MCF 10A (cell line): ENCODE measurements at regions of chr2 and their contacts with region 1.

Region 1: GRCh38 chr2:223993621-223994232 is 36.5 kb downstream of the MRPL44 start:
- DNase-seq: peak; percentile 81
- H3K4me3 Mint-ChIP-seq: no peak overlapping the region
- H3K27ac Mint-ChIP-seq: peak overlapping the region; percentile 9
- H3K4me1 Mint-ChIP-seq: peaks cover 11% of the 10 kb centered on the region
- H3K27me3 Mint-ChIP-seq: no peaks in the 10 kb centered on the region
- CTCF ChIP-seq: peak; percentile 73

Region 2: DNA sequence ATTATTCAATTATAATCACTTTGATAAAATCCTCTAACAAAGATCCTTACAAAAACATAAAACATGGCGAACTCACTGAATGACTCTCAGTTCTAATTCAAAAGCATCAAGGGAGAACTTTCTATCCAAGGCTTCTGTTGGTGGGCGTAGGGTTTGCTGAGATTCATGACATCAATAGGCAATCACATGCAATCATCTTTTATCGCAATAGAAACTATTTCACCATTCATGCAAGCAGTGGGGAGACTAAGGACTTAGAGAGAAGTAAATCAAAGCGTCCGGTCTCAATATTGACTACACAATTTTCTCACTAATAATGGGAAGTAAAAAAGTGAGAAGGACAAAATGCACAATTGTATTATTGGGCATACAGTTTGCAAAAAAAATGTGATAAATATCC is 560.3 kb before region 1 on chr2:
- CTCF ChIA-PET with region 1: no interaction called
- POLR2A ChIA-PET with region 1: no interaction called
- intact Hi-C with region 1: no loop called
- DNase-seq: no peak
- H3K4me3 Mint-ChIP-seq: no peak overlapping the region
- H3K27ac Mint-ChIP-seq: no peak overlapping the region
- H3K4me1 Mint-ChIP-seq: no peaks in the 10 kb centered on the region
- H3K27me3 Mint-ChIP-seq: no peaks in the 10 kb centered on the region
- CTCF ChIP-seq: no peak

Region 3: GRCh38 chr2:223970343-223971128 is 23.2 kb before region 1 on chr2:
- CTCF ChIA-PET with region 1: interaction called, 126 read pairs
- POLR2A ChIA-PET with region 1: interaction called, 3 read pairs
- intact Hi-C with region 1: no loop called
- DNase-seq: peak; percentile 66
- H3K4me3 Mint-ChIP-seq: no peak overlapping the region
- H3K27ac Mint-ChIP-seq: no peak overlapping the region
- H3K4me1 Mint-ChIP-seq: no peaks in the 10 kb centered on the region
- H3K27me3 Mint-ChIP-seq: no peaks in the 10 kb centered on the region
- CTCF ChIP-seq: peak; percentile 75

Region 4: DNA sequence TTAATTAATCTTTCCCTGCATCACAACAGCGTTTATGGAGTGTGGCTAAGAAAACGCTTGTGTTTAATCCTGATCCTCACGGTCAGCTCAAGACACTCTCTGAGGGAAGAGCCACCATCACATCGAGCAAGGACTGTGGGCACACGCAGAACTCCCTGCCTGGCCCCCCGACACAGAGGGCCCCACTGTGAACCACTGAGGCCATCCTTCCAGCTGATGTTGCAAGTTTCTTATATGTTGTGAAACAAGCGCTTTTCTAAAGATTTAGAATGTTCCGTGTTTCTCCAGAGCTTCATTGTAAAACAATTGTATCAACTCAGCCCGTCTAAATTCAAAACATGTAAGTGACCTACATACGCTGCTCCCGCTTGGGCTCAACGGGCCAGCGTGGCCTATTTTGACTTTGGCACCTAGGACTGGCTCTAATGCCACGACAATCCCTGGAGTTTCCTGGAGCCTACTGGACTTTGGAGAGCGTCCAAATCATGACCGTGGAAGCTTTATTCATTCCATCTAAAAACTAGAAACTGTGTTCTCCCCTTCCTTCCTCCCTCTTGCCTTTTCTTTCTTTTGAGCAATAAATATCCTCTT is 10.5 kb after region 1 on chr2:
- CTCF ChIA-PET with region 1: interaction called, 41 read pairs
- POLR2A ChIA-PET with region 1: no interaction called
- intact Hi-C with region 1: no loop called
- DNase-seq: no peak
- H3K4me3 Mint-ChIP-seq: no peak overlapping the region
- H3K27ac Mint-ChIP-seq: no peak overlapping the region
- H3K4me1 Mint-ChIP-seq: no peaks in the 10 kb centered on the region
- H3K27me3 Mint-ChIP-seq: no peaks in the 10 kb centered on the region
- CTCF ChIP-seq: no peak

Region 5: GRCh38 chr2:224145751-224146355 is 152.1 kb after region 1 on chr2:
- CTCF ChIA-PET with region 1: interaction called, 4 read pairs
- POLR2A ChIA-PET with region 1: interaction called, 3 read pairs
- intact Hi-C with region 1: loop called (anchors 1 kb)
- DNase-seq: peak; percentile 91
- H3K4me3 Mint-ChIP-seq: peak overlapping the region; percentile 42
- H3K27ac Mint-ChIP-seq: peak overlapping the region; percentile 97
- H3K4me1 Mint-ChIP-seq: peaks cover 45% of the 10 kb centered on the region
- H3K27me3 Mint-ChIP-seq: no peaks in the 10 kb centered on the region
- CTCF ChIP-seq: no peak

Region 6: GRCh38 chr2:224278531-224278930 is 284.8 kb after region 1 on chr2:
- CTCF ChIA-PET with region 1: interaction called, 455 read pairs
- POLR2A ChIA-PET with region 1: interaction called, 33 read pairs
- intact Hi-C with region 1: no loop called
- DNase-seq: no peak
- H3K4me3 Mint-ChIP-seq: no peak overlapping the region
- H3K27ac Mint-ChIP-seq: no peak overlapping the region
- H3K4me1 Mint-ChIP-seq: peaks cover 9% of the 10 kb centered on the region
- H3K27me3 Mint-ChIP-seq: no peaks in the 10 kb centered on the region
- CTCF ChIP-seq: no peak